Posterior vena cava (tissue), 2 donors: ENCODE measurements at regions of chr13 and their contacts with region 1.

Region 1: GRCh38 chr13:54424344-54424743 is 1395.7 kb downstream of the OLFM4 start:
- DNase-seq: no peak

Region 2: DNA sequence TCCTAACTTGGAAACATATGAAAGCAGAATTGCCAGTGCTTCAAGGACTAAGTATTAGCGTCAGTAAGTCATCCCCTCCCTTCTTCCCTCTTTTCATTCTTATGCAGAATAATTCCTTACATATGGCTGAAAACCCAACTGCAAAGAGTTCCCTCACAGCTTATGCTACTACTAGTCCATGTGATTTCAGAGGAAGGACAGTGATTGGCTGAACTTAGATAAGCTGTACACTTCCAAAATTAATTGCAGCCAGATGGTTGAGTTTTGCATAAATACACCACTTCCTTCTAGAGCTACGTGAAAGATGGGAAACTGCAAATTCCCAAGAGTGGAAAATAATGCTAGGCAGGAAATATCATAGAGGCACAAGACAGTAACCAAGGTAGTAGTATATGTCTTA is 665.3 kb before region 1 on chr13:
- intact Hi-C with region 1: loop called in 1 of 2 experiments (anchors 5 kb)
- DNase-seq: no peak